BJ (cell line): ENCODE measurements at regions of chr12 and their contacts with region 1.

Region 1: DNA sequence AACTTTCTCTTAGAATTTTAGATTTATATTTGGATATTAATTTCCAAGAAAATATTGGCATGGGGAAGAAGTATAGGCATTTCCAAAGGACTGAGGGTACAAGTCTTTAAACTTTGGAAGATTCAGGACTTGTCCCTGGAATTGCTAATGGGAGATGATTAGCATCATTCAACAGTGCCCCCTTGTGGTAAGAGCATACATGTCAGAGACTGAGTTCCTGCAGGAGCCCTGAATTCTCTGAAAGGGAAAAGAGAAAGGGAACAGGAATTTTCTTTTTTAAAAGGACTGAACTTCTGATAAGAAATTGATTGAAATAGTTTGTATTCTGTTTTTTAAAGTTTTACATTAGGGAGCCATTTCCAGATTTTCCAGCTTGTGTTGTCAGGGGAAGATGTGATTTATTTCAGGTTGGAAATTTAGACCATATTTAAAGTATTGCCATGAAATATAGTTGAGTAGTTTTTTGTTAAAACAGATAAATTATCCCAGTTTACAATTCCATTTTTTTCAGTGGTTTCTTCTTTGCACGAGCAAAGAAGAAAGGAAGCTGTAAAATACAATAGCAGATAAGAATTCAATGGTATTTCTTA is 44.0 kb upstream of the REP15 start:
- DNase-seq: peak; percentile 26
- H3K4me3 ChIP-seq: no peak overlapping the region
- H3K27me3 ChIP-seq: no peaks in the 10 kb centered on the region
- CTCF ChIP-seq: peak; percentile 84

Region 2: GRCh38 chr12:27319409-27319808 is 332.9 kb before region 1 on chr12:
- CTCF ChIA-PET with region 1: no interaction called
- POLR2A ChIA-PET with region 1: no interaction called
- DNase-seq: peak; percentile 41
- H3K4me3 ChIP-seq: no peak overlapping the region
- H3K27me3 ChIP-seq: no peaks in the 10 kb centered on the region
- CTCF ChIP-seq: no peak

Region 3: GRCh38 chr12:27424631-27425230 is 227.5 kb before region 1 on chr12:
- CTCF ChIA-PET with region 1: interaction called, 17 read pairs
- POLR2A ChIA-PET with region 1: interaction called, 4 read pairs
- DNase-seq: no peak
- H3K4me3 ChIP-seq: no peak overlapping the region
- H3K27me3 ChIP-seq: no peaks in the 10 kb centered on the region
- CTCF ChIP-seq: peak; percentile 61

Region 4: DNA sequence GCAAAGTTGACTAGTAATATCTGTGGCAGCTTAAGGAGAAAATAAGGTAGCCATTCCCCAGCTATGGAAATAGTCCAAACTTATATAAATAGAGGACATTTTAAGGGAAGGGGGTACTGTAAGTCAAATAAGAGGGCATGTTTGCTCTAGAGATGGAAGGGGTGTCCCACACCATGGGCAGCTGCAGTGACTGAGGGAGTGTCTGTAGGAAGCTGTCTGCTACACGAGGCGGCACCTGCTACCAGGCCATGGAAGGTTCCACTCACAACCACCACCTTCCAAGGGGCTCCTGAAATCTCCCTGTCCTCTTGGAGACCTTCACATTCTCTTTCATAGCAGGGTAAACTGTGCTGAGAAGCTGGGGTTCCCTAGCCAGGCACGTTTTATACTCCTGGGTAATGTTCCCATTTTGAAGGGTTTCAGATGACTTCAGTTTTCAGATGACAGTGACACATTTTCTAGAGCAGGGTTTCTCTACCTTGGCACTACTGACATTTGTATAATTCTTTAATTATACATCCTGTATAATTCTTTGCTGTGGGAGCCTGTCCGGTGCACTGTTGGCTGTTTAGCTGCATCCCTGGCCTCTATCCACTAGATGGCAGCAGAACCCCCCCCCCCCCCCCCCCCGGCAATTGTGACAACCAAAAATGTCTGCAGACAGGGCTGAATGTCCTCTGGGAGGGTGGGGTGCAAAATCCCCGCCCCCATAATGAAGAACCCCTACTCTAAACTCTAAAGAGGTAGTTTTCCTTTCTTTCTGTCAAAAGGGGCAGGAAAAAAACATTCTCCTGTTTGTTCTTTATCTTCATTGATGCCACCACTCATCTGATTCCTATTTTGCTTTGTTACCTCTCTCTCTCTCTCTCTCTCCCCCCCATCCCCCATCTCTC is 217.3 kb before region 1 on chr12:
- CTCF ChIA-PET with region 1: interaction called, 10 read pairs
- POLR2A ChIA-PET with region 1: no interaction called
- DNase-seq: no peak
- H3K4me3 ChIP-seq: no peak overlapping the region
- H3K27me3 ChIP-seq: no peaks in the 10 kb centered on the region
- CTCF ChIP-seq: peak; percentile 60

Region 5: GRCh38 chr12:27637524-27637923 is 14.7 kb before region 1 on chr12:
- CTCF ChIA-PET with region 1: no interaction called
- POLR2A ChIA-PET with region 1: no interaction called
- DNase-seq: no peak
- H3K4me3 ChIP-seq: no peak overlapping the region
- H3K27me3 ChIP-seq: no peaks in the 10 kb centered on the region
- CTCF ChIP-seq: no peak

Region 6: GRCh38 chr12:27667540-27667939 is 15.3 kb after region 1 on chr12:
- CTCF ChIA-PET with region 1: interaction called, 14 read pairs
- POLR2A ChIA-PET with region 1: no interaction called
- DNase-seq: no peak
- H3K4me3 ChIP-seq: no peak overlapping the region
- H3K27me3 ChIP-seq: no peaks in the 10 kb centered on the region
- CTCF ChIP-seq: no peak